ENCODE measurements at regions of chr3 and their contacts with region 1.

Region 1: DNA sequence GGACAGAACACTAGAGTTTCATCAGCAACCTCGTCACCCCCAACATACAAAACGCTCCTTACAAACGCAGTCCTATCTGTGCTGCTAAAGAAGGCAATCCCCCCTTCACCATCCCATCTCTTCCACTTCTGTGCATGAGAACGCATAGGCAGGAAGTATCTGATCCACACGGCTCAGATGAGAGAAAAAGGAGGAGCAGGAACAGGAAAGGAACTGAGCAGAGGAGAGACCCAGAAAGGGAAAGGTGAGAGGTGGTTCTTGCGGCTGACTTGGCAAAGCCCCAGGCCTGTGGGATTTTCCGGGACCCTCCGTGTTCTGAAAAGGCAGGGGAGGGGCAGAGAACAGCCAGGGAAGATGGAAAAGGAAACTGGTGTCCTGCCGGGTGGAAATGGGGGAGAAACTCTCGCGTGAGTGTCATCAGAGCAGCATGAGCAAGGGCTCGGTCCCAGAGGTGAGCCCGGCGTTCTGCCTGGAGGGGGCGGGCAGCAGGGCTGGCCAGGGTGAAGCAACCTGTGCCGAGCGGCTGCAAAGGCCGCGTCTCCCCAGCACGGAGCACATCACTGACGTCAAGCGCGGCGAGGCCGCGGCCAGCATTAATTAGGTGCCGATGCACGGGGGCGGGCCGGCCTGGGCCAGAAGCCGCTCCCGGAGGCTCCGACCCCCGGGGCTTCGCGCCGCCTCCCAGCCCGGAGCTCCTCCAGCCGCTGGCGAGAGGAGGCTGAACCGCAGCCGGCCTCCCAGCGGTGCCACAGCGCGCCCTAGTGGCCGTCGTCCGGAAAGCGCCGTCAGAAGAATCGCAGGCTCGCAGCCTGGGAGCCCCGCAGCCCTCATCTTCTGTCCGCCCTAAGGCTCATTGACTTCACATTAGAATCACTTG is 35.8 kb downstream of the CPN2 start:
- DNase-seq: peak; percentile 63
- ATAC-seq: peak; percentile 87
- H3K4me3 ChIP-seq: peak overlapping the region; percentile 37 to 51
- H3K27ac ChIP-seq: peak overlapping the region; percentile 51
- H3K4me1 ChIP-seq: peaks cover 26 to 62% of the 10 kb centered on the region in 2 experiments
- H3K27me3 ChIP-seq: no peaks in the 10 kb centered on the region
- CTCF ChIP-seq: peak in 2 of 3 experiments; percentile 81 to 87; a peak in 4 of 6 replicates
- POLR2A ChIP-seq: no peak
- RAD21 ChIP-seq: no peak

Region 2: GRCh38 chr3:193292386-193292785 is 1022.9 kb before region 1 on chr3:
- CTCF ChIA-PET with region 1: no interaction called
- POLR2A ChIA-PET with region 1: no interaction called
- RAD21 ChIA-PET with region 1: no interaction called
- intact Hi-C with region 1: no loop called
- DNase-seq: no peak
- ATAC-seq: no peak
- H3K4me3 ChIP-seq: no peak overlapping the region
- H3K27ac ChIP-seq: no peak overlapping the region
- H3K4me1 ChIP-seq: no peaks in the 10 kb centered on the region
- H3K27me3 ChIP-seq: peaks cover 9% of the 10 kb centered on the region; the same call in 1 of the 2 replicates
- CTCF ChIP-seq: no peak
- POLR2A ChIP-seq: no peak
- RAD21 ChIP-seq: no peak

Region 3: GRCh38 chr3:193665370-193665989 is 649.8 kb before region 1 on chr3:
- CTCF ChIA-PET with region 1: interaction called, 8 read pairs
- POLR2A ChIA-PET with region 1: no interaction called
- RAD21 ChIA-PET with region 1: no interaction called
- intact Hi-C with region 1: loop called (anchors 5 kb)
- DNase-seq: peak; percentile 23
- ATAC-seq: no peak
- H3K4me3 ChIP-seq: no peak overlapping the region
- H3K27ac ChIP-seq: no peak overlapping the region
- H3K4me1 ChIP-seq: no peaks in the 10 kb centered on the region
- H3K27me3 ChIP-seq: no peaks in the 10 kb centered on the region
- CTCF ChIP-seq: peak; percentile 20 to 59 (median 35); a peak in 4 of 6 replicates
- POLR2A ChIP-seq: no peak
- RAD21 ChIP-seq: peak; percentile 49

Region 4: GRCh38 chr3:193788189-193788991 is 526.9 kb before region 1 on chr3:
- CTCF ChIA-PET with region 1: interaction called, 145 read pairs
- POLR2A ChIA-PET with region 1: no interaction called
- RAD21 ChIA-PET with region 1: interaction called in 1 of 2 experiments, 13 read pairs
- intact Hi-C with region 1: loop called (anchors 2 kb)
- DNase-seq: peak; percentile 51
- ATAC-seq: peak; percentile 93
- H3K4me3 ChIP-seq: no peak overlapping the region
- H3K27ac ChIP-seq: no peak overlapping the region
- H3K4me1 ChIP-seq: peaks cover 7 to 38% of the 10 kb centered on the region in 2 experiments
- H3K27me3 ChIP-seq: peaks cover 18% of the 10 kb centered on the region; the same call in 1 of the 2 replicates
- CTCF ChIP-seq: peak; percentile 67 to 93 (median 90); a peak in 5 of 6 replicates
- POLR2A ChIP-seq: no peak
- RAD21 ChIP-seq: peak; percentile 99

Region 5: DNA sequence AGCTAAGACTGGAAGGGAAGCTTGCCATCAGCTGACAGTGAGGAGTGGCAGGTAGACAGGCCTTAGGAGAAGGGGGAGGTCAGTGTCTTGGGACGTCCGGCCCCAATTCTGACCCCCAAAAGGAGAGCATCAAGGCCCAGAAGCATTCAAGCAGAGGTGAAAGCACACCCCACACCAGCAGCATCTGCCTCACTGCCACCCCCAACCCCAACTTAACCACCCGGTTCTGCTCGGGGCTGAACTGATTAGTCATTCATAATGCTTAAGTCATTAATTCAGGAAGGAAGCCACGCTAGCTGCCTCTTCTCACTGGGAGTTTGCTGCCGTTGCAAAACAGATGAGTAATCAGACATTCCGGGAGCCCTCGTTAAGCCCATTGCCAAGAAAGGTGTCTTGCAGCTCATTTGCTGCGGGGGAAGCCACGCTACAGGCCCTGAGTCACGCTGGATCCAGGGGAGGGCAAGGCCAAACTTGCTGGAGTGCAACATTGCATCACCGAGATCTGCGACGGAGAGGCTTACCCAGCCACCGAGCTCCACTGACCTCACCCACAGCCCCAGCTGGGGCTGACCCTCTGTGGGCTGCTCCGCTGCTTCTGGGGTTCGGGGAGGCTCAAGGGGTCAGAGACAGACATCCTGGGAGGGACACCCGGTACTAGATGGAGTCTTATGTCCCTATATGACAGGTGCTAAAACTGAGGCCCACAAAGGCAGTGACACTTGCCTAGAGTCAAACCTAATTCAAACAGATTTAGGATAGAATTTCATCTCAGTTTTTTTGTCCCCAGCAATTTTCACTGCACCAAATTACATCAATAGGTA is 225.8 kb before region 1 on chr3:
- CTCF ChIA-PET with region 1: interaction called, 4 read pairs
- POLR2A ChIA-PET with region 1: no interaction called
- RAD21 ChIA-PET with region 1: no interaction called
- intact Hi-C with region 1: loop called (anchors 5 kb)
- DNase-seq: peak; percentile 98
- ATAC-seq: peak; percentile 88
- H3K4me3 ChIP-seq: peak overlapping the region in 1 of 2 experiments; percentile 28; a peak in 2 of 4 replicates
- H3K27ac ChIP-seq: peak overlapping the region; percentile 56
- H3K4me1 ChIP-seq: peaks cover 10 to 32% of the 10 kb centered on the region in 2 experiments; a peak in 3 of 4 replicates
- H3K27me3 ChIP-seq: no peaks in the 10 kb centered on the region
- CTCF ChIP-seq: no peak
- POLR2A ChIP-seq: peak; percentile 35
- RAD21 ChIP-seq: peak; percentile 44; the same call in 1 of the 2 replicates

Region 6: GRCh38 chr3:194141415-194142155 is 173.7 kb before region 1 on chr3:
- CTCF ChIA-PET with region 1: interaction called, 16 read pairs
- POLR2A ChIA-PET with region 1: interaction called, 6 read pairs
- RAD21 ChIA-PET with region 1: interaction called, 13 to 14 read pairs
- intact Hi-C with region 1: loop called (anchors 1 kb)
- DNase-seq: peak; percentile 82
- ATAC-seq: peak; percentile 64
- H3K4me3 ChIP-seq: peak overlapping the region; percentile 24 to 39; a peak in 3 of 4 replicates
- H3K27ac ChIP-seq: peak overlapping the region; percentile 91
- H3K4me1 ChIP-seq: peaks cover 52 to 66% of the 10 kb centered on the region in 2 experiments
- H3K27me3 ChIP-seq: no peaks in the 10 kb centered on the region
- CTCF ChIP-seq: no peak
- POLR2A ChIP-seq: no peak
- RAD21 ChIP-seq: no peak

Region 7: GRCh38 chr3:194231929-194232842 is 83.1 kb before region 1 on chr3:
- CTCF ChIA-PET with region 1: no interaction called
- POLR2A ChIA-PET with region 1: no interaction called
- RAD21 ChIA-PET with region 1: no interaction called
- intact Hi-C with region 1: no loop called
- DNase-seq: no peak
- ATAC-seq: no peak
- H3K4me3 ChIP-seq: no peak overlapping the region
- H3K27ac ChIP-seq: no peak overlapping the region
- H3K4me1 ChIP-seq: peaks cover 5 to 6% of the 10 kb centered on the region in 2 experiments; a peak in 2 of 4 replicates
- H3K27me3 ChIP-seq: no peaks in the 10 kb centered on the region
- CTCF ChIP-seq: no peak
- POLR2A ChIP-seq: no peak
- RAD21 ChIP-seq: no peak

Region 8: GRCh38 chr3:194265483-194265892 is 49.8 kb before region 1 on chr3:
- CTCF ChIA-PET with region 1: interaction called, 15 read pairs
- POLR2A ChIA-PET with region 1: interaction called, 4 read pairs
- RAD21 ChIA-PET with region 1: interaction called in 1 of 2 experiments, 5 read pairs
- intact Hi-C with region 1: no loop called
- DNase-seq: no peak
- ATAC-seq: no peak
- H3K4me3 ChIP-seq: no peak overlapping the region
- H3K27ac ChIP-seq: no peak overlapping the region
- H3K4me1 ChIP-seq: peaks cover 28 to 34% of the 10 kb centered on the region in 2 experiments
- H3K27me3 ChIP-seq: no peaks in the 10 kb centered on the region
- CTCF ChIP-seq: no peak
- POLR2A ChIP-seq: no peak
- RAD21 ChIP-seq: no peak

Measured in HCT116 (cell line).